Posterior vena cava (tissue), 2 donors: ENCODE measurements at regions of chr21 and their contacts with region 1.

Region 1: DNA sequence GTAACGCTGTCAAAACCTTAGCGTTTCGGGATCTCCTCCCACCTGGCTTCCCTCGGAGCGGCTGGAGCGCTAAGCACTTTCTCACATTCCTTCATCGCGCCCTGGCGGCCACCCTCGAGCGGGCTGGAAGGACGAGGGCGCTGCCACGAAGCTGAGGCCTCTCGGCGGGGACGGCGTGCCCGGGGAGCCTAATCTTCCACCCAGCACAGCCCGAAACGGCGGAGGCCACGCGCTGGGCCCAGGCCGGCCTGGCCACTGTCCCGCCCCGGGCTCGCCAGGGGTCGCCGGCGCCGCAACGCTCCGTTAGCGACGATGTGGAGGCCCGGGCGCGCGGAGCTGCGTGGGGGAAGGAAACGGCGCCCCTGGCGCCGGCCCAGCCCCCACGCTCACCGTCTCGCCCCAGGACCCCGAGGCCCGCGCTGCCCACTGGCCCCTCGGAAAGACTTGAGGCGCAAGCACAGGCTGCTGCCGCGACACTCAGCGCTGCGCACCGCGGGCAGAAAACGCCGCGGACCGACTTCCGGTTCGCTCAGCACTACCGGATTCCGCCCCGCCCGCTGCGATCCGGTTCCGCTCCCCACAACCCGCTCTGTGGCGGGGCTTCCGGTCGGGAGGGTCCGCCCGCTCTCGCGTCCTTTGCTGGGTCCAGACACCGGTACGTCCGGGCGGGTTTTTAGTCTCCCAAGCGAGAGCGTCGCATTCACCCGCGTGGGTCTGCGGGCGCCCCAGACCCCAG is at the start of gene YBEY:
- DNase-seq: peak; percentile 97
- total RNA-seq, gene YBEY: 8.4 to 9.3 TPM

Region 2: GRCh38 chr21:45949928-45950733 is 335.8 kb before region 1 on chr21:
- intact Hi-C with region 1: loop called in 1 of 2 experiments (anchors 10 kb)
- DNase-seq: no peak

Region 3: DNA sequence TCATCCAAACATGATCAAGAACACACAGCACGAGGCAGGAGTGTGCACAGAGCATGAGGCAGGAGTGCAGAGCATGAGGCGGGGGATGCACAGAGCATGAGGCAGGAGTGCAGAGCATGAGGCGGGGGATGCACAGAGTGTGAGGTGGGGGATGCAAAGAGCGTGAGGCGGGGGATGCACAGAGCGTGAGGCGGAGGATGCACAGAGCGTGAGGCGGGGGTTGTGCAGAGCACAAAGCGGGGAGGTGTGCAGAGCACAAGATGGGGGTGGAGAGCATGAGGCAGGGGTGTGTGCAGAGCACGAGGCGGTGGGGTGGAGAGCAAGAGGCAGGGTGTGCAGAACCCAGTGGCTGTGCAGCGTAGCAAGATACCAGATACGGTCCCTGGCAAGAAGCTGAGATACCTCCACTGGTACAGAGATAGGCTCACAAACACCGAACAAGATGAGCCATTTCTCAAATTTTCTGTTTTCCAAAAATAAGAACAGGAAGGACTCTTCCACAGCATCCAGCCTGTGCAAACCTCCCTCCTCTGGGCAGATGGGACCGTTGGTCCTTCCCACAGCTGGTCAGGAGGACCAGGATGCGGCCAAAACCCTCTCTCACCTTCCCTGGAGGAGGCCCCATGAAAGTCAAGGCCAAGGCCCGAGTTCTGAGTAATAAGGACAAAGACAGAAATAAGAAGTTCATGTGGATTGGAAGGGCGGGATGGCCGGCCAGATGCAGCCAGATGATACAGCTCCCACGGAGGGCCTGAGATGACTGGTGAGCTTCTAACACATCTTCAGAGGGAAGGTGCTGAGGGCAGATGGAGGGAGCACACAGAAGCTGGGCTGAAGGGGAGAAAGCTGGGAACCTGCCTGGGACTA is 113.7 kb before region 1 on chr21:
- intact Hi-C with region 1: loop called in 1 of 2 experiments (anchors 10 kb)
- DNase-seq: no peak

Region 4: GRCh38 chr21:46458315-46459023 is 172.5 kb after region 1 on chr21 and contains the start of gene DIP2A:
- intact Hi-C with region 1: no loop called
- DNase-seq: peak; percentile 98
- total RNA-seq, gene DIP2A: 24.3 to 26.4 TPM